ENCODE measurements at regions of chr6 and their contacts with region 1.

Region 1: GRCh38 chr6:2931970-2932748 is 29.1 kb upstream of the SERPINB9 start:
- DNase-seq: peak; percentile 9
- H3K4me3 ChIP-seq: no peak overlapping the region
- H3K27me3 ChIP-seq: 0 out of 2 replicates have a peak, but pooled peaks cover 2% of the 10 kb centered on the region
- CTCF ChIP-seq: peak; percentile 99

Region 2: DNA sequence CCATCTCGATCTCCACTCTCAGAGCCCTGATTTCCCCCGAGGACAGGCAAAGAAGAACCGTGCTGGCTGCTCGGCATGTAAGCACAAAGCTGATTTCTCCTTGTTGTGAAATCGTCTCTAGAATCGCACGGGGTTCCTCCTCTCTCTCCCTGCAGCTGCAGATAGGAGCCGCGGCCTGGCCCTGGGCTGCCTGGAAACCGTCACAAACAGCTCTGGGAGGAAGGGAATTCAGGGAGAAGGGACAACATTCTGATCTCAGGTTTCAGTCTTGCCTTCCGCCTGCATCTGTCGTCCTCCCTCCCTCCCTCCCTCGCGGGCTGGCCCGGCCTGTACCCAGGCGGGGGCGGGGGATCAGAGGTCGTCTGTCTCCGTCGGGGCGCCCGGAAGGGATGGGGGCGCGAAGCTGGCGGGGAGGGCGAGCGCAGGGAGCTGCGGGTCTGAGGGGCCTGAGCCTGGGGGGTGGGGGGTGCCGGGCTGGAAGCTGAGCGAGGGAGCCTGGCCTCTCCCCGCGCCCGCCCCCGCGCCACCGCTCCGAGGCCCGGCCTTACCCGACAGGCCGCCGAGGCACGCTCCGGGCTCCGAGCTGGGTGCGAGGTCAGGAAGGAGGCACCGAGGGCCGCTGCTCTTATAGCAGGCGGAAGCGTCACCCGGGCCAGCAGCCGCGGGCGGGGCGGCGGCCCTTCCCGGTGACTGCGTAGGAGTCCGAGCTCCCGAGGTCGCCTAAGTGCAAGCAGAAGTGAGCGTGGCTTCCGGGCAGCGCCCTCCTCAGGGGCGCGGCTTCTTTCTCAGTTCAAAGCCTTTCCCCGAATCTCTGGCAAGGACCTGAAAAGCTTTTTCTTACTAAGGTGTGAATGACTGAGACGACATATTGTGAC is 90.7 kb before region 1 on chr6 and contains the start of gene SERPINB1:
- CTCF ChIA-PET with region 1: interaction called, 151 read pairs
- POLR2A ChIA-PET with region 1: no interaction called
- DNase-seq: peak; percentile 84
- H3K4me3 ChIP-seq: peak within 1 kb of the TSS; percentile 55
- H3K27me3 ChIP-seq: no peaks in the 10 kb centered on the region
- CTCF ChIP-seq: no peak
- polyA plus RNA-seq, gene SERPINB1: 17.9 and 31.3 TPM in 2 replicates

Region 3: GRCh38 chr6:2848851-2849250 is 83.3 kb before region 1 on chr6:
- CTCF ChIA-PET with region 1: interaction called, 151 read pairs
- POLR2A ChIA-PET with region 1: no interaction called
- DNase-seq: no peak
- H3K4me3 ChIP-seq: no peak overlapping the region
- H3K27me3 ChIP-seq: no peaks in the 10 kb centered on the region
- CTCF ChIP-seq: no peak

Region 4: GRCh38 chr6:2917065-2917464 is 15.1 kb before region 1 on chr6:
- CTCF ChIA-PET with region 1: interaction called, 36 read pairs
- POLR2A ChIA-PET with region 1: no interaction called
- DNase-seq: no peak
- H3K4me3 ChIP-seq: no peak overlapping the region
- H3K27me3 ChIP-seq: peaks cover 1% of the 10 kb centered on the region; the same call in 1 of the 2 replicates
- CTCF ChIP-seq: no peak